ENCODE measurements at regions of chr2 and their contacts with region 1.

Region 1: GRCh38 chr2:110853507-110853906 is 121.1 kb downstream of the ACOXL start:
- DNase-seq: peak; percentile 34 to 69 (median 47)
- H3K4me3 ChIP-seq: no peak overlapping the region
- H3K4me3 Mint-ChIP-seq: peak overlapping the region; percentile 15 to 83 (median 67)
- H3K27ac ChIP-seq: no peak overlapping the region
- H3K27ac Mint-ChIP-seq: peak overlapping the region; percentile 89 to 98 (median 94)
- H3K4me1 ChIP-seq: peaks cover 37% of the 10 kb centered on the region
- H3K4me1 Mint-ChIP-seq: peaks cover 59 to 76% (median 60%) of the 10 kb centered on the region in 3 donors
- H3K27me3 ChIP-seq: no peaks in the 10 kb centered on the region
- H3K27me3 Mint-ChIP-seq: peaks cover 0 to 5% of the 10 kb centered on the region in 2 donors

Region 2: GRCh38 chr2:110807522-110807921 is 46.0 kb before region 1 on chr2:
- CTCF ChIA-PET with region 1: interaction called, 17 read pairs
- POLR2A ChIA-PET with region 1: interaction called, 5 read pairs
- DNase-seq: no peak
- H3K4me3 ChIP-seq: no peak overlapping the region
- H3K4me3 Mint-ChIP-seq: no peak overlapping the region
- H3K27ac ChIP-seq: no peak overlapping the region
- H3K27ac Mint-ChIP-seq: peak overlapping the region in 1 of 8 donors; percentile 34
- H3K4me1 ChIP-seq: peaks cover 4% of the 10 kb centered on the region
- H3K4me1 Mint-ChIP-seq: peaks cover 14 to 19% (median 17%) of the 10 kb centered on the region in 3 donors
- H3K27me3 ChIP-seq: no peaks in the 10 kb centered on the region
- H3K27me3 Mint-ChIP-seq: peaks cover 14 to 16% of the 10 kb centered on the region in 2 donors

Region 3: GRCh38 chr2:110838657-110839384 is 14.7 kb before region 1 on chr2:
- CTCF ChIA-PET with region 1: interaction called, 17 read pairs
- POLR2A ChIA-PET with region 1: no interaction called
- DNase-seq: no peak
- H3K4me3 ChIP-seq: no peak overlapping the region
- H3K4me3 Mint-ChIP-seq: no peak overlapping the region
- H3K27ac ChIP-seq: no peak overlapping the region
- H3K27ac Mint-ChIP-seq: no peak overlapping the region
- H3K4me1 ChIP-seq: no peaks in the 10 kb centered on the region
- H3K4me1 Mint-ChIP-seq: peaks cover 3 to 14% (median 12%) of the 10 kb centered on the region in 3 donors
- H3K27me3 ChIP-seq: no peaks in the 10 kb centered on the region
- H3K27me3 Mint-ChIP-seq: peaks cover 0 to 3% of the 10 kb centered on the region in 2 donors

Region 4: DNA sequence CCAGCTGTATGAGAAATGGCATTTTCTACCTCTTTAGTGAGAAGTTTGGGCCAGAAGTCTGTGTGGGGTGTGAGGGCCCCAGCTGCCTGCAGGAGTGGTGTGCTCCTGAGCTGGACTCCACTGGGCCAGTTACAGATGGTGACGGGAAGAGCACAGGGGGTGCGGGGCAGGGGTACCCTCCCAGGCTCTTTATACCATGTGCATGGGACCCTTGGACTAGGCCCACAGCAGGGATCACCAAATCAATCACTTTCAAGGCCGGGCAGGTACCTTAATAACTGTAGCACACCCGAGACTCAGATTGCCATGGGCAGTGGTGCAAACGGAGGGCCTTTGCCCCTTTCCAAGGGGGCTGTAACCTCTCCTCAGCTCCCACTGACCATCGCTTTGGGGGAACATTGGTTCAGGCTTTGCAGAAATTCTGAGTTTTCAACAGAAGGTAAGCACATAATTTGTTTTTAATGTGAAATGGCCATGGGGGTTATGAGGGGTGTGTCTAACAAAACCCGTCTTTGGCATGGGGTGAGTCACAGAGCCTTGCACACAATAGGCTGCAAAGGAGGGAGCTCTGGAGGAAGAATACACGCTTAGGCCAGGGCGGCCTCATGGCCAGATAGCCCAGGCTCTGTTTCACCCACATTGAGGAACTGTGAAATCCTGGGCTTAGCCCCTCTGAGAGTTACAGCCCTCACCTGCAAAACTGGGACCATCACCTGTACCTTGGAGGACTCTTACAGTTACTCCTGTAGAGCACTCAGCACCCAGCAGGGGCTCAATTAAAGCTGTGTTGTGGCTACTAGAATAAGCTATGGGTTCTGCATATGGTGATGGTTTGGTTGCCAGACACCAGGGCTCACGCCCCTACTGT is 126.2 kb after region 1 on chr2:
- CTCF ChIA-PET with region 1: no interaction called
- POLR2A ChIA-PET with region 1: no interaction called
- DNase-seq: no peak
- H3K4me3 ChIP-seq: no peak overlapping the region
- H3K4me3 Mint-ChIP-seq: no peak overlapping the region
- H3K27ac ChIP-seq: no peak overlapping the region
- H3K27ac Mint-ChIP-seq: no peak overlapping the region
- H3K4me1 ChIP-seq: no peaks in the 10 kb centered on the region
- H3K4me1 Mint-ChIP-seq: peaks cover 0 to 1% (median 0%) of the 10 kb centered on the region in 3 donors
- H3K27me3 ChIP-seq: no peaks in the 10 kb centered on the region
- H3K27me3 Mint-ChIP-seq: peaks cover 0 to 1% of the 10 kb centered on the region in 2 donors

Region 5: DNA sequence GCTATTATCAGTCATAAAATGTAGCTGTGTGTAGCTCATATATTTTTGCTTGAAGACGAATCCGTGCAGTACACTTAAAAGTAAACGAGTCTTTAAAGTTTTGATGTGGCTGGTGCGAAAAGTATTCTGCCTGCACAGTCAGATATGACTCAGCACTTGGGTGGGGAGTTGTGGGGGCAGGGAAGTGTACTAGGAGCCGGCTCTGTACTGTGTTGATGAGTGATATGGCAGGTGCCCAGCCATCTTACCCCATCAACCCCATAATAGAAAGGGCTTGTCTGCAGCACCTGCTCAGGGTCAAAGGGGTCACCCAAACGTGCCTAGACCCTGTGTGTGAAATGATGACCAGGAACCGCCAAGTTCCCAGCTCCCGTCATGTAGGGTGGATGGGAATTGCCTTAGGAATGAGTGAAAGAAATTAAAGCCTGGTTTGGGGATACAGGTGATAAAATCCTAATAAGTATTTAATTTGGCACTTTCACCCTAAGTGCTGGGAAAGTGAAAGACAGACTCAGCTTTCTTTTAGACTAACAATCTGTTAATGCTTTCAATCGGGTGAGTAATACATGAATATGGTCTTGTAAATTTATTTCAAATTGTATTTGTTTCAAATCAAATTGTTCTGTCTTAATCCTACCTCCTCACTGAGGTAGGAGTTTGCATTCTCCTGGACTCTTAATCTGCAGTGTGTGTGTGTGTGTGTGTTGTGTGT is 315.2 kb after region 1 on chr2:
- CTCF ChIA-PET with region 1: no interaction called
- POLR2A ChIA-PET with region 1: no interaction called
- DNase-seq: peak in 1 of 5 donors; percentile 53
- H3K4me3 ChIP-seq: no peak overlapping the region
- H3K4me3 Mint-ChIP-seq: no peak overlapping the region
- H3K27ac ChIP-seq: no peak overlapping the region
- H3K27ac Mint-ChIP-seq: peak overlapping the region in 1 of 8 donors; percentile 61
- H3K4me1 ChIP-seq: peaks cover 4% of the 10 kb centered on the region
- H3K4me1 Mint-ChIP-seq: peaks cover 16 to 20% (median 18%) of the 10 kb centered on the region in 3 donors
- H3K27me3 ChIP-seq: no peaks in the 10 kb centered on the region
- H3K27me3 Mint-ChIP-seq: peaks cover 5% of the 10 kb centered on the region in 2 donors

Measured in CD8-positive, alpha-beta memory T cell (primary cell).